ENCODE measurements at regions of chrX and their contacts with region 1.

Region 1: DNA sequence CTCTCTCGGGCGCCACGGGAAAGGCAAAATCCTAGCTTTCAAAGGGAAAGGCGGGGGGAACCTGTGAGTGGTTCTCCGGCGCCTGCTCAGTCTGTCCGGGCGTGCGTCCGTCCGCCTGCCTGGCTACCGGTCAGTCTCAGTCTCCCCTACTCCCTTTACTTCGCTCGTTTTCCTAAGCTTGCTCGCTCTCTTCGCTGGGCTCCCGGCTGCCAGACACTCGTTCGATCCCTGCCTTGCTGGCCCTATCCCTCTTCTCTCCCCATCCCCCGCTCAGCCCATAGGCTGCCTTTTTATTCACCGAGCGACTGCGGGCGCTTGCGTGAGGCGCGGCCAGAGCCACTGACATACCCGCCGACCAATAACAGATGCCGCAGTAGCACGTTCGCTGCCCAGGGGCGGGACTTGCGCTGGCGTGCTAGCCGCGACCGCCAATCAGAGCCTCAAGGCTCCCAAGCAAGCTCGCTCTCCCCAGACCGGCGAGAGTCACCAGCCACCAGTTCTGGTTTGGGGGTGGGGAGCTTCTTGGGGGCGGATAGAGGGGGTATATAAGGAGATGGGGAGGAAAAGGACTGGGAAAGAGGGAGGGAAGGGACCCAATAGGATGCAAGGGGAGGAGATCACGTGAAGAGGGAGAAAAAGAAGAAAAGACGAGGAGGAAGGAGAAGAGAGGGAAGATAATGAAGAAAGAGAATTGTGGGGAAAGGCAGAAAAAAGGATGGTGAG is 30.0 kb downstream of the ARHGEF9 start:
- DNase-seq: peak; percentile 90
- ATAC-seq: peak; percentile 98
- H3K4me3 ChIP-seq: peak overlapping the region; percentile 92
- H3K27ac ChIP-seq: peak overlapping the region; percentile 65
- H3K4me1 ChIP-seq: 0 out of 2 replicates have a peak, but pooled peaks cover 3% of the 10 kb centered on the region
- H3K27me3 ChIP-seq: no peaks in the 10 kb centered on the region
- CTCF ChIP-seq: no peak

Region 2: GRCh38 chrX:63350941-63351616 is 403.9 kb before region 1 on chrX and contains the start of gene SPIN4:
- CTCF ChIA-PET with region 1: no interaction called
- POLR2A ChIA-PET with region 1: no interaction called
- intact Hi-C with region 1: loop called (anchors 5 kb)
- DNase-seq: peak; percentile 89
- ATAC-seq: peak; percentile 94
- H3K4me3 ChIP-seq: peak within 1 kb of the TSS; percentile 96
- H3K27ac ChIP-seq: peak within 1 kb of the TSS; percentile 63
- H3K4me1 ChIP-seq: peaks cover 14% of the 10 kb centered on the region; the same call in 1 of the 2 replicates
- H3K27me3 ChIP-seq: no peaks in the 10 kb centered on the region
- CTCF ChIP-seq: no peak
- total RNA-seq, gene SPIN4: 9.0 and 12.1 TPM in 2 replicates

Region 3: GRCh38 chrX:63718010-63718694 is 36.9 kb before region 1 on chrX:
- CTCF ChIA-PET with region 1: no interaction called
- POLR2A ChIA-PET with region 1: no interaction called
- intact Hi-C with region 1: no loop called
- DNase-seq: no peak
- ATAC-seq: no peak
- H3K4me3 ChIP-seq: no peak overlapping the region
- H3K27ac ChIP-seq: no peak overlapping the region
- H3K4me1 ChIP-seq: no peaks in the 10 kb centered on the region
- H3K27me3 ChIP-seq: no peaks in the 10 kb centered on the region
- CTCF ChIP-seq: no peak

Region 4: DNA sequence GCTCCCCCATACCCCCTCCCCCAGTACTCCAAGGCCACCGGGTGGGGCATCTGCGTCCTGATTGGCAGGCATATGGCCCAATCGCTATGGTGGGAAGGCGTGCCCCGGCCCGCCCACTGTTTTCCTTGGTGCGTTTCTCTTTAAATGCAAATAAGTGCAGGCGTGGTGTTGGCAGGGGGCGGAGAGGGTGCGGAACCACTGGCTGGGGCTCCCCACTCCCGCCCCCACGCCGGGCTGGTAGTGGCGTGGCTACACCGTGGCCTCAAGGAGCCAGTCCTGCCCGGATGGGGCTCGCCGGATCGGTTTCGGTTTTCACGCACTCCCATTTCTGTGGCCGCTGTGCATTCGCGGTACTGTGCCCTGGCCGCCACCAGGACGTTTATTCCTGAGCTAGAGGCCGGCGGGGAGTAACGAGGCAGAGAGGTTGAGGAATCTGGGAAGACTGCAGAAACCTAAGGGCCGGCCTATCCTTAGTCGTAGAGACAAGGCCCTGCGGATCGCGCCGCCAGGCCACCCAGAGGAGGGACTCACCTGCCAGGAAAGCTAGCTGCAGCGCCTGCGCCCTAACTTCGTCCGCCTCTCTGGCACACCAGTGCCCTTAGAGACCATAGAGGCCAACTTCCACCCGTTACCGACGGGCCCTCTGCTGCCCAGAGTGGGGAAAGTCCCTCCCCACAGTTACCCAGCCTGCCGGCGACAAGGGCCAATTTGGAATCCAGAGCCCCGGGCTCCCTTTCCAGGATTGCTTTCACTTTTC is 450.9 kb after region 1 on chrX:
- CTCF ChIA-PET with region 1: no interaction called
- POLR2A ChIA-PET with region 1: no interaction called
- intact Hi-C with region 1: loop called (anchors 2 kb)
- DNase-seq: peak; percentile 92
- ATAC-seq: peak; percentile 89
- H3K4me3 ChIP-seq: peak overlapping the region; percentile 88
- H3K27ac ChIP-seq: peak overlapping the region; percentile 88
- H3K4me1 ChIP-seq: peaks cover 17% of the 10 kb centered on the region
- H3K27me3 ChIP-seq: no peaks in the 10 kb centered on the region
- CTCF ChIP-seq: peak; percentile 18; the same call in 1 of the 2 replicates